ENCODE measurements at regions of chr6 and their contacts with region 1.

Region 1: DNA sequence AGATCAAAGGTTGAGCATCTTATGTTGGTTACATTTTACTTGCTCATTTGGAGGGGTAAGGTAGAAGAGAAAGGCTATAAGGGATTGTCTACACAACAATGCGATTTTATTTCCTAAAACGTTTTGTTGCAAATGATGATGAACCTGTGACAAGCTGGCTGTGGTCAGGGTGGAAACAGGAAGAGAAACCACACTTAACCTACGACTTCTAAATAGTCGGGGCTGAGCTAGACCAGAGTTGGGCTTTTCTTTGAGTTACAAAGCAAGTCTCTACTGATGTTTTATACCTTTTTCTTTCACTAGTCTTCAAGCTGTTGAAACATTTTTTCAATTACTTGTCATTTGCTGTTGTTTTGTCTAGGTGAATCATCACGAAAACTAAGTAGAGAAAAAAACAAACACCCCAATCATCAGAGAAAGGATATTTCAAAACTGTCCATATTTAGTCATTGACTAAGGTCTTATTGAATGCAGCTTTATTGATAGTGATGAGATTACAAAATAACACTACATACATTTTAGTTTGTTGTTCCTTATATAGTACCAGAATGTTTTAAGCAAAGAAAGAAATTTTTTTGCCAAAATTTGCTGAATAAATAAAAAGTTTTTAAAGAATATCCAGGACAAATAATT is 18.0 kb downstream of the KLHL31 start:
- DNase-seq: no peak
- H3K4me3 ChIP-seq: no peak overlapping the region
- H3K27ac ChIP-seq: peak overlapping the region in 2 of 4 donors; percentile 14 to 34
- H3K4me1 ChIP-seq: peaks cover 11 to 52% (median 21%) of the 10 kb centered on the region in 3 donors
- H3K27me3 ChIP-seq: peaks cover 0 to 6% (median 0%) of the 10 kb centered on the region in 4 donors
- CTCF ChIP-seq: no peak
- POLR2A ChIP-seq: no peak

Region 2: GRCh38 chr6:53090576-53090975 is 557.0 kb before region 1 on chr6:
- intact Hi-C with region 1: no loop called
- DNase-seq: no peak
- H3K4me3 ChIP-seq: no peak overlapping the region
- H3K27ac ChIP-seq: no peak overlapping the region
- H3K4me1 ChIP-seq: no peaks in the 10 kb centered on the region
- H3K27me3 ChIP-seq: no peaks in the 10 kb centered on the region
- CTCF ChIP-seq: no peak
- POLR2A ChIP-seq: no peak

Region 3: DNA sequence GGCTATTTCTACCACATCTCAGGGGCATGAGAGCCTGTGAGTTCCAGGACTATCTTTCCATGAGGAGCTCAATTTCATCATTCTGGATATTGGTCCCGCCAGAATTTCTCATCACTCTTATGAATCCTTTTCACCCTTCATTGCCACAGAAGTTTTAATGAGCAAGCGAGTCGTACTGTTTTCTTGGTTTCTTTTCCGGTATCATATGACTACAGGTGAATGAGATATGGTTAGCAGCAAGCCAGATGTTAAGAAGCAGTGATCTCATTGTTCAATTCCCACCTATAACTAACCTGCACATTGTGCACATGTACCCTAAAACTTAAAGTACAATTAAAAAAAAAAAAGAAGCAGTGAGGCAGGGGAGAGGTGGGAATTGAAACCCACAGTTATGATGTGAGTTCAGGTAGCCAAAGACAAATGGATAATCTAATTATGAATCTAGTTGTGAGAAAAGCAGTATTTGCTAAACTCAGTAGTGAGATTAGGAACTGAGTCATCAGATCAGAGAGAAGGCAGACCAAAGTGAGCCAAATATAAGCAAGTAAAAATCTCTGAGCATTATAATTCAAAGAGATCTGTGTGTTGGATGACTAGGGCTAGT is 220.8 kb before region 1 on chr6:
- intact Hi-C with region 1: no loop called
- DNase-seq: no peak
- H3K4me3 ChIP-seq: no peak overlapping the region
- H3K27ac ChIP-seq: no peak overlapping the region
- H3K4me1 ChIP-seq: no peaks in the 10 kb centered on the region
- H3K27me3 ChIP-seq: peaks cover 0 to 12% (median 0%) of the 10 kb centered on the region in 4 donors
- CTCF ChIP-seq: no peak
- POLR2A ChIP-seq: no peak

Region 4: DNA sequence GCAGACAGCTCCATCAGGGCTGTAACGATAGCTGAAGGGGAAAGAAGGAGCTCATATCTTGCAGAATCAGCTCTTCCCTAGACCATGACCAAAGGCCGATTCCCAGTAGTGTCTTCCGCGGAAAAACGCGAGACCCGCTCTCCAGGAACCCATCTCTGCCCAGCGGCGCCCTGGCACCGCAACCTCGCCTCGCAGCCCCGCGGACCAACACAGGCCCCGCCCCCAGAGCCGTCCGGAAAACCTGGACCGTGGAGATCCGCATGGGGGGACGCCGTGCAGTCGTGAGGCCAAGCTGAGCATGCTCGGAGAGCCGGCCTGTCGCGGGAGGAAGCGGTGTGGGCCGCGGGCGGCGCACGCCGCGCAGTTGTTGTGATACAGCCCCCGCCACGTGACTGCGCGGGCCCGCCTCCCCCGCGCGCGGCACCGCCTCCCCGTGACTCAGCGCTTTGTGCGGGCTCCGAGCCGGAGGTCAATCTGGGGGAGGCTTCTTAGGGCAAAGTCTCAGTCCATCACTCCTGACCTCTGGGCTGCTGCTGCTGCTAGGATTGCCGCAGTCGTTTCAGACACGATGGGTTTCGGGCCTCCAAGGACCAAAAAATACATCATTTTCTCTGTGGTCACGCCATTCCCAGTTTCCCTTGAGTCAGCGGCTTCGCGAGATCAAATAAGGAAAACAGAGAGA is 99.6 kb before region 1 on chr6:
- intact Hi-C with region 1: loop called (anchors 2 kb)
- DNase-seq: peak; percentile 79
- H3K4me3 ChIP-seq: peak overlapping the region; percentile 43 to 84 (median 67)
- H3K27ac ChIP-seq: peak overlapping the region; percentile 82 to 93 (median 91)
- H3K4me1 ChIP-seq: peaks cover 12 to 48% (median 25%) of the 10 kb centered on the region in 3 donors
- H3K27me3 ChIP-seq: no peaks in the 10 kb centered on the region
- CTCF ChIP-seq: peak in 2 of 6 experiments; percentile 13 to 62
- POLR2A ChIP-seq: peak in 3 of 4 donors; percentile 35 to 82 (median 36)

Measured in esophagus squamous epithelium (tissue), 5 donors.